ENCODE measurements at regions of chr12 and their contacts with region 1.

Region 1: GRCh38 chr12:133181238-133181959 is at the start of gene ZNF268:
- DNase-seq: peak; percentile 96
- ATAC-seq: peak; percentile 91
- H3K4me3 Mint-ChIP-seq: peak within 1 kb of the TSS; percentile 95
- H3K27ac Mint-ChIP-seq: peak within 1 kb of the TSS; percentile 88
- H3K4me1 Mint-ChIP-seq: peaks cover 17% of the 10 kb centered on the region
- H3K27me3 Mint-ChIP-seq: no peaks in the 10 kb centered on the region
- total RNA-seq, gene ZNF268: 18.6 to 19.9 TPM

Region 2: DNA sequence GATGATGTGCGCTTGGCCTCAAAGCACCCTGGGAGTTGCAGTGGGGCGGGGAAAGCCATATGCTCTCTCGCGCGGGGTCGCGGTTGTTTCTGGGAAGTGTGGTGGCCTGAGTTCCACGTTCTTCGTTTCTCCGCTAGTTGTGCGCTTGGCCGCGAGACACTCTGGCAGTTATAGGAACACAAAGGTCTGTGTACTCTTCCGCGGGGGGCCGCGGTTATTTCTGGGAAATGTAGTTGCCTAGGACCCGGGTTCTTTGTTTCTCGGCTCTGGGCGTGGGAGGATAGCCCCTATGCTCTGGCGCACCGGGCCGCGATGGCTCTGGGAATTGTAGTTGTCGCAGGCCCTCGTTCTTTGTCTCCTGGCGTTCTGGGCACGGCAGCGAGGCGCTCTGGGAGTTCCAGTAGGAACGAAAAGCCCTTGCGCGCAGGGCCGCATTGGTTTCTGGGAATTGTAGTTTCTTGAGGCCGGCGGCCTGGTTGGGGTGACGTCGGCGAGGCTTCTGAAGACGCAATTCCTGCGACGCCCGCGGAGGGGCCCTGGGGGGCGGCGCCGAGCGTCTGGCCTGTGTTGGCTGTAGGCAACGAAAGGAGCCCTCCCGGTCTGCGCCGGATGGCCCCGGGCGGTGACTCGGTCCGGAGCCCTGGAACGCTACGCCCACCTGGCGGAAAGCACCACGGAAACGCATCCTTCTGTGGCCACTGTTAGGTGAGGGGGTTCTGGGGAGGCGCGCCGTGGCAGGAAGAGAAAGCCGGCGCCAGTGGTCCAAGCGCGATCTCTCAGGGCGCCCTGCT is 100.8 kb before region 1 on chr12 and contains the start of gene ZNF140:
- CTCF ChIA-PET with region 1: interaction called, 10 read pairs
- DNase-seq: peak; percentile 97
- ATAC-seq: peak; percentile 72
- H3K4me3 Mint-ChIP-seq: no peak within 1 kb of the TSS
- H3K27ac Mint-ChIP-seq: no peak within 1 kb of the TSS
- H3K4me1 Mint-ChIP-seq: peaks cover 10% of the 10 kb centered on the region
- H3K27me3 Mint-ChIP-seq: no peaks in the 10 kb centered on the region
- total RNA-seq, gene ZNF140: 11.2 to 13.6 TPM

Region 3: GRCh38 chr12:133130038-133130807 is 51.2 kb before region 1 on chr12 and contains the starts of genes ZNF10 and ZNF891:
- CTCF ChIA-PET with region 1: interaction called, 12 read pairs
- DNase-seq: peak; percentile 97
- ATAC-seq: peak; percentile 92
- H3K4me3 Mint-ChIP-seq: peak within 1 kb of the TSS; percentile 98
- H3K27ac Mint-ChIP-seq: peak within 1 kb of the TSS; percentile 100
- H3K4me1 Mint-ChIP-seq: peaks cover 15% of the 10 kb centered on the region
- H3K27me3 Mint-ChIP-seq: no peaks in the 10 kb centered on the region
- total RNA-seq, gene ZNF10: 7.7 to 7.9 TPM
- total RNA-seq, gene ZNF891: 2.0 to 2.3 TPM

Region 4: DNA sequence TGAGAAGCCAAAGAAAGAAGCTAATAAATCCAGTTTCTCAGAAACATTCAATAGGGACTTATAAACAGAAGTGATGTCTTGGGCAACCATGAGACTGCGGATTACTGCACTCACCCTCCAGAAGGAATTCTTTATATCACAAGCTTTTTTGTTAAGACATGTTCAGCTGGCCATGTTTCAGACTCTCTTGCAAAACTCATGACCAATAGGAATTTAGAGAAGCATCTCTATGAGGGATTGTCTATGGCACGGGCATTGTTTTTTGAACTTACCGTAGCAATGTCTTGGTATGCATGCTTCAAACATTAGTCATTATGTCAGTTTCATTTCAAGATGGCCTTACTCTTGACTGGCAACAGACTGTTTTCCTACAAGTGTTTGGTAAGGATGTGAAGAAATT is 15.6 kb before region 1 on chr12:
- CTCF ChIA-PET with region 1: no interaction called
- DNase-seq: no peak
- ATAC-seq: no peak
- H3K4me3 Mint-ChIP-seq: no peak overlapping the region
- H3K27ac Mint-ChIP-seq: no peak overlapping the region
- H3K4me1 Mint-ChIP-seq: no peaks in the 10 kb centered on the region
- H3K27me3 Mint-ChIP-seq: no peaks in the 10 kb centered on the region

Measured in activated CD8-positive, alpha-beta memory T cell treated with anti-CD3 and anti-CD28 coated beads, Interleukin-2, amount 10 ng/mL, durations not matched to agents 7 days and 5 days (primary cell).